GM13976 (cell line): ENCODE measurements at regions of chr22 and their contacts with region 1.

Region 1: GRCh38 chr22:29245637-29246385 is 22.0 kb downstream of the RHBDD3 start:
- DNase-seq: peak; percentile 87
- CTCF ChIP-seq: peak; percentile 97

Region 2: DNA sequence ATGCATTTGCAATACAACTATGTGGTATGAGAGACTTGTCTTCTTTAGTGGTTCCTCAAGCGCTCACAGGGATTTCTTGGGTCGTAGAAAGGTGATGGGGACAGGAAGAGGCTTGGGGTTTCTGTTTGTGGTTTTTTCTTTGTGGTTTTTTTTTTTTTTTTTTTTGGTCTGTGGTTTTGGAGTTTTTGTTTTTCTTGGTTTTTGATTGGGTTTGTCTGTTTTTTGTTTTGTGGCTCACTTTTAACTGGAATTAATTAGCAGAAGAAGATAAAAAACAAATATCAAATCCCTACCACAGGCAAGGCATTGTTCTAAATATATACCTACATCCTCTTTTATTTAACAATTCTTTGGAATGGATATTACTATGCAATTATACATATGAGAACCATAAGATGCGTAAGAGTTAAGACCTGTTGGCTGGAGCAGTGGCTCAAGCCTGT is 571.7 kb before region 1 on chr22:
- in situ Hi-C with region 1: no loop called
- DNase-seq: peak; percentile 58
- CTCF ChIP-seq: no peak

Region 3: DNA sequence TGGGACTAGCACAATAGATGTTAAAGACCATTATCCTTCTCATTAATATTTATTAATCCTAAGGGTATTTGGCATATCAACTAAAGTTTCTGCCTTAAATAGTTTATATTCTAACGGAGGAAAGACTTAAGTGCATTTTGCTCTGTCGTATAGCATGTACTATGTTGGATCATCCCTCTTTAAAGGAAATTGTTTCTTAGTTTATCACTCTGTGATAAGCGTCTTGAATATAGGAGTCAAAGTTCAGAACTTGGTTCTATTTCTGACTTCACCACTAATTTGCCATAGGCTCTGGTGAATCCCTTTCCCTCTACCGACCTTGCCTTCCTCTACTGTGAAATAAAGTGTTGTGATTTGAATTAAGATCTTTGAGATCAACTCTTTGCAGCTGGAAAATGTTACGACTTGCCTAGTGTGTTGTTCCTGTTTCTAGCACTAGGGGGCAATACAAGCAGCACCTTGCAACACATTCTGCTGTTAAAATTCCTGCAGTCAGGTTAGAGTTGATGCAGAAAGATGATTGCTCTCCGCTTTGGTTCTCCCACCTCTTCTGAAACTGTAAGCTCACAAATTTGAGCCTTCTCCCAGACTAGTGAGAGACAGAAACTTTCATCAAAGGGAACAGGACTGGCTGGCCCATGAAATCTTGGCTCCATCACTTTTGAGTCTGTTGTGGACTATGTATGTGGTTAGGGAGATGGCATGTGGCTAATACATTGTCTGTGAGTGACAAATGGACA is 390.3 kb before region 1 on chr22:
- in situ Hi-C with region 1: loop called (anchors 25 kb)
- DNase-seq: peak; percentile 73
- CTCF ChIP-seq: peak; percentile 86

Region 4: GRCh38 chr22:29128891-29129807 is 116.7 kb before region 1 on chr22:
- in situ Hi-C with region 1: no loop called
- DNase-seq: no peak
- CTCF ChIP-seq: no peak

Region 5: GRCh38 chr22:29154364-29155048 is 91.3 kb before region 1 on chr22:
- in situ Hi-C with region 1: loop called (anchors 10 kb)
- DNase-seq: peak; percentile 88
- CTCF ChIP-seq: peak; percentile 99

Region 6: GRCh38 chr22:29766632-29767170 is 520.9 kb after region 1 on chr22 and contains the start of gene ZMAT5:
- in situ Hi-C with region 1: no loop called
- DNase-seq: peak; percentile 99
- CTCF ChIP-seq: no peak